Left cardiac atrium (tissue), 4 donors: ENCODE measurements at regions of chr17 and their contacts with region 1.

Region 1: DNA sequence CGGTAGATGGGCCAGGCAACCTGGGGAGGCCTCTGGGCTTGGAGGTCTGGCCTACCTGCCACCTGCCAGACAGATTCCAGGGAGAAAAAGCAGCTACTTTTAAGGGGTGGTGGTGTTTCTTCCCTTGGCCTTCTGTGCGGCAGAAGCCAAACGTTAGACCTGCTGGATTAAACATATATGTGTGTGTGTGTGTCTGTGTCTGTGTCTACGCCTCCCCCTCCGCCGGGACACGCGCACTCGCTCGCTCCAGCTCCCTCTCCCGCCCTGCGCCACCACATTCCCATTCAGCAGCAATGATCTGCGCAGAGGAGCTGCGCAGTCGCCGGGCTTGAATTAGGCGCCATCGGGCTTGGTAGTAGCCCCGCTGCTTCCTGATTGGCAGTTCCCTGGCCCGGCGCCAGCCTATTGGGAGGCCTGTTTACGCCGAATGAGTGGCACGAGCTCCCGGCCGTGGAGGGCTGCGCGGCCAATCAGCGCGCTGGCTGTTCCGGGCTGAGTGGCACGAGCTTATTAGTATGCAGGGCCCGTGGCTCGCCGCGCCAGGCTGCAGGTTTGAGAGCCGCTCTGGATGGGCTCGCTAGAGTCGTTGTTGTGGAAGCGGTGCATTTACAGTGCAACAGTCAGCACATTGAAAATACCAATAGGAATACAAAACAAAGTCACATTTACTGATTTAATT is at the start of gene BAHCC1:
- DNase-seq: peak; percentile 100
- ATAC-seq: peak; percentile 74 to 86
- total RNA-seq, gene BAHCC1: 8.3 to 9.9 TPM

Region 2: GRCh38 chr17:81253358-81254131 is 141.5 kb before region 1 on chr17:
- intact Hi-C with region 1: loop called in 1 of 2 experiments (anchors 10 kb)
- DNase-seq: no peak
- ATAC-seq: peak; percentile 20 to 22

Region 3: GRCh38 chr17:81294856-81295680 is 100.0 kb before region 1 on chr17 and contains the start of gene SLC38A10:
- intact Hi-C with region 1: loop called (anchors 5 kb)
- DNase-seq: peak; percentile 95
- ATAC-seq: peak; percentile 96
- total RNA-seq, gene SLC38A10: 46.4 to 54.0 TPM

Region 4: DNA sequence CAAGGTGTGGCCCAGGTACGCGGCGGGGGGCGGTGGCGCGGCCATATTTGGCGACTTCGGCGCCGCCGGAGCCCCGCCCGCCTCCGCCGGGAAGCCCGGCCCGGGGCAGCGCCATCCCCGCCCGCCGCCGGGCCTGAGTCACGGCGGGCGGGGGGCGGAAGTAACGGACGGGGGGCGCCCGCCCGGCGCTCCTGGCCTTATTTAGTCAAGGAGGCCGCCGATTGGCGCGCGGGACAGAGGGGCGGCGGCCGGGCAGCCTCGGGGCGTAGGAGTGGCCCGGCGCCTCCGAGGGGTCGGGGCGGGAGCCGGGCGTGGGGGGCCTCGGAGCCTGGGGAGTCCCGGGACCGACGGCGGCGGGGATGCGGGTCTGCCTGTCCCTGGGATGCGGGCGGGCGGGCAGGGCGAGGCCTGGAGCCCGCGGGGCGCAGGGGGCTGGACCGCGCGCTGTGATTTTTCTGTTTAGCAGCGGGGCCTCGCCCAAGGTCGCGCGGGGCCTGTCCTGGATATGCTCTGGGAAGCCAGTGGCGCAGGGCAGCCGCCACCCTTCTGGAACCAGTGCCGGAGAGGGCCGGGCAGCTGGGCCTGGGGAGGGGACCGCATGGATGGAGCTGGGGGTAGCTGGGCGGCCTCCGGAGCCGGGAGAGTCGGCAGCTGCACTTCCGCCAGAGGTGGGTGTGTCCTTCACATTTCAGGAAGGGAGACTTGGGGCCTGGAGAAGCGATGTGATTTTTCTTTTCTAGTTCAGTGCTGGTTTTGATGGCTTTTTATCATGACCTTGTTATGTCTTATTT is 119.9 kb after region 1 on chr17:
- intact Hi-C with region 1: loop called in 1 of 2 experiments (anchors 2 kb)
- DNase-seq: peak; percentile 89
- ATAC-seq: peak; percentile 39 to 48